WTC11 (cell line): ENCODE measurements at regions of chr3 and their contacts with region 1.

Region 1: GRCh38 chr3:44284949-44285348 is 43.3 kb downstream of the TOPAZ1 start:
- DNase-seq: no peak
- ATAC-seq: no peak
- H3K4me3 Mint-ChIP-seq: no peak overlapping the region
- H3K27ac Mint-ChIP-seq: no peak overlapping the region
- H3K4me1 Mint-ChIP-seq: no peaks in the 10 kb centered on the region
- H3K27me3 Mint-ChIP-seq: no peaks in the 10 kb centered on the region
- CTCF ChIP-seq: no peak

Region 2: DNA sequence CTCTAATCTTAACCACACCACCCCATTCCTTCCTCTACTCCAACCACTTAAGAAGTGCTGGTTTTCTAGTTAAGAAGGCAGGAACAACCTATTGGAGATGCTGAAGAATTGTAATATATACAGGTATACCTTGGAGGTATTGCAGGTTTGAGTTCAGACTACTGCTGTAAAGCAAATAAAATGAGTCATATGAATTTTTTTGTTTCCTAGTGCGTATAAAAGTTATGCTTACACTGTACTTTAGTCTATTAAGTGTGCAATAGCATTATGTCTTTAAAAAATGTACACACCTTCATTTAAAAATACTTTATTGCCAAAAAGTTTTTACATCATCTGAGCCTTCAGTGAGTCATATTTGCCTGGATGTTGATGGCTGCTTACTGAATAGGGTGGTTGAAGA is 20.8 kb before region 1 on chr3:
- CTCF ChIA-PET with region 1: no interaction called
- POLR2A ChIA-PET with region 1: interaction called, 10 read pairs
- DNase-seq: no peak
- ATAC-seq: no peak
- H3K4me3 Mint-ChIP-seq: no peak overlapping the region
- H3K27ac Mint-ChIP-seq: no peak overlapping the region
- H3K4me1 Mint-ChIP-seq: no peaks in the 10 kb centered on the region
- H3K27me3 Mint-ChIP-seq: no peaks in the 10 kb centered on the region
- CTCF ChIP-seq: no peak

Region 3: GRCh38 chr3:44476181-44476611 is 191.2 kb after region 1 on chr3:
- CTCF ChIA-PET with region 1: no interaction called
- POLR2A ChIA-PET with region 1: no interaction called
- DNase-seq: no peak
- ATAC-seq: no peak
- H3K4me3 Mint-ChIP-seq: peak overlapping the region; percentile 85
- H3K27ac Mint-ChIP-seq: peak overlapping the region; percentile 68; the same call in 1 of the 2 replicates
- H3K4me1 Mint-ChIP-seq: peaks cover 38% of the 10 kb centered on the region
- H3K27me3 Mint-ChIP-seq: no peaks in the 10 kb centered on the region; the same call in 1 of the 2 replicates
- CTCF ChIP-seq: no peak